Activated naive CD4-positive, alpha-beta T cell treated with anti-CD3 and anti-CD28 coated beads for 36 hours (primary cell): ENCODE measurements at regions of chr3 and their contacts with region 1.

Region 1: DNA sequence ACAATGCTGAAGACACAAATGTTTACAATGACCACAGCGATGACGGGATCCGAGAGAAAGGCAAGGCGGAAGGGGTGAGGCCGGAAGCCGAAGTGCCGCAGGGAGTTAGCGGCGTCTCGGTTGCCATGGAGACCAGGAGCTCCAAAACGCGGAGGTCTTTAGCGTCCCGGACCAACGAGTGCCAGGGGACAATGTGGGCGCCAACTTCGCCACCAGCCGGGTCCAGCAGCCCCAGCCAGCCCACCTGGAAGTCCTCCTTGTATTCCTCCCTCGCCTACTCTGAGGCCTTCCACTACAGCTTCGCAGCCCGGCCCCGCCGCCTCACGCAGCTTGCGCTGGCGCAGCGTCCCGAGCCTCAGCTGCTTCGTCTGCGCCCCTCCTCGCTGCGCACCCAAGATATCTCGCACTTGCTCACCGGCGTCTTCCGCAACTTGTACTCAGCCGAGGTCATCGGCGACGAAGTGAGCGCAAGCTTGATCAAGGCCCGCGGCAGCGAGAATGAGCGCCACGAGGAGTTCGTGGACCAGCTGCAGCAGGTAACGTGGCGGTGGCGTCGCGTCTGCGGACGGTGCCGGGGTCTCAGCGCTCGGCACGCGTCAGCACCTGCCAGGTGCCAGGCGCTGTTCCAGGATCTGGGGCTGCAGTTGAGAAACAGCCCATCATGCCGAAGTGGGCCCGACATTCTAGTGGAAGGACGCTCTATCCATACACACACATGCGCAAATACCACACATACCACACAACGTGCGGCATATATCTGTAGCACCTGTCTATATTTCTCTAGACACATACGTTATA is at the start of gene DLEC1:
- DNase-seq: peak; percentile 88
- H3K4me3 Mint-ChIP-seq: peak within 1 kb of the TSS; percentile 66
- H3K27ac Mint-ChIP-seq: peak within 1 kb of the TSS; percentile 88
- H3K4me1 Mint-ChIP-seq: peaks cover 28% of the 10 kb centered on the region
- H3K27me3 Mint-ChIP-seq: peaks cover 4% of the 10 kb centered on the region
- total RNA-seq, gene DLEC1: 0.17 to 0.19 TPM

Region 2: DNA sequence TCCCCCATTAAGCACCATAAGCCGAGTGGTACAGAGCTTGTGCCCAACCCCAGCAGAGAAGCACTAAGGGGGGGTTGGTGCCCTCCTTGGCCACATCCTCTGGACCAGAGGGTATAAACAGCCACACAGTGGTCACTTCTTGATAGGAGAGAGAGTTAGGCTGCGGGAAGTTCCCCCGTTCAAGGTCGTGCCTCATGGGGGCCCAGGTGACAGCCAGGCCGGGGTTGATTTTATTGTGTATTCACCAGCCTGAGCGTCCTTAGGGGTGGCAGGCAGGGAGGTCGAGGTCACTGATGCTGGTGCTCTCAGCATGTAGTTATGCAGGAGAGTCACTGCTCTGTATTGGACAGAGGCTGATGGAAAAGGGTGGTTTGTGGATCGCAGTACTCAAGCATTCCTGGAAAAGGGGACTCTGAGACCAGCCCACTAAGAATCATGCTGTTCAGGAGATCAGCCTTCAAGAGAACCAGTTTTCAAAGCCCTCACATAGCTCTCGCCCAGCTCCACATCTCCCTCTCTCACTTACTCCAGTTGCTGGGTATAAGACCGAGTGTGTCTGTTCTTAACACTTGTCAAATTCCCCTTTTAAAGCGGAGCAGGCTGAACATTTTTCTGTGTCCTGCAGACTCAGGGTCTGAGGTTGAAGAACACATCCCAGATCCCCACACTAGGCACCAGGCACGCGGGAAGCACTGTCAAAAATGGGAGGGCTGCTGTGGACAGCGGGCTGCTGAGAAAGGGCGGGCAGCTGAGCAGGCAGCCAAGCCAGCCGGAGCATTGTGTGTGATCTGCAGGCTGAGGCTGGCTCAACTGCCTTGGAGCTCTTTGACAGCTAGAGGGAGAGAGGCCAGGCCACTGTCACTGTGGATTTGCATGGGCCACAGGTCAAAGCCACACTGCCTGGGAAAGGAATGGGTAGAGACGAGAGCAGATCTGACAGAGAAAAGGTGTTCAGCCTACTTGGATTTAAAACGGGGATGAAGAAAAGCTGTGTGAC is 585.6 kb before region 1 on chr3:
- CTCF ChIA-PET with region 1: no interaction called
- intact Hi-C with region 1: no loop called
- DNase-seq: no peak
- H3K4me3 Mint-ChIP-seq: no peak overlapping the region
- H3K27ac Mint-ChIP-seq: no peak overlapping the region
- H3K4me1 Mint-ChIP-seq: peaks cover 5% of the 10 kb centered on the region
- H3K27me3 Mint-ChIP-seq: peaks cover 63% of the 10 kb centered on the region

Region 3: GRCh38 chr3:38004415-38005076 is 34.8 kb before region 1 on chr3:
- CTCF ChIA-PET with region 1: no interaction called
- intact Hi-C with region 1: loop called (anchors 1 kb)
- DNase-seq: peak; percentile 74
- H3K4me3 Mint-ChIP-seq: no peak overlapping the region
- H3K27ac Mint-ChIP-seq: peak overlapping the region; percentile 63
- H3K4me1 Mint-ChIP-seq: peaks cover 11% of the 10 kb centered on the region
- H3K27me3 Mint-ChIP-seq: no peaks in the 10 kb centered on the region

Region 4: DNA sequence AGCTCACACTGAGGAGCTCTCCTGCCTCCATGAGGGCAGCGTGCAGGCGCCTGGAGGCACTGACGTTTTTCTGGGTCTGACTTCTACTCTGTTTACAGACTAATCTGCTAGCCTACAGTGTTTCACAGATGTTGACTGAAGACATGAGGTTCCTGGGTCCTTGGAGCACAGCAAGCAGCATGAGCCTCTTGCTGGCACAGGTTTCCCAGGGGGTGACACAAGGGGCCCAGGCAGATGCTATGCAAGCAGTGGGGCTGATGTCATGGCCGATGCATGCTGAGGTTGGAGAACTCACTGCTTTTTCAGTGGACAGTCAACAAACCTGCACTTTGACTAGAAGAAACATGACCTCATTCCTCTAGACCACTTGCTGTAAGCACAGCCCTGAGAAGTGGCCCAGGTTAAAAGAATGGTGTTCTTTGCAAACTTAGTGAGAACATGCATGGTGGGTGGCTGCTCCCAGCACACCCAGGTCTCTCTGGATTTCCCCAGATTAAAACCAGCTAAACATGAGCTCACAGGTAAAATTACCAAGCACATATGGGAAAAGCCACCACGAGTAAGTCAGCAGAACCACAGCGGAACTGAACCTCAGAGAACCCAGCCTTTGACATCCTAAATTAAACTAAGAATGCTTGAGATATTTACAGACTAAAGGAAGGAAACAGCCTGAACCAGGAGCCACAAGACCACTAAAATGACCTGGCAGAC is 15.1 kb after region 1 on chr3:
- CTCF ChIA-PET with region 1: interaction called, 4 read pairs
- intact Hi-C with region 1: loop called (anchors 1 kb)
- DNase-seq: peak; percentile 18
- H3K4me3 Mint-ChIP-seq: no peak overlapping the region
- H3K27ac Mint-ChIP-seq: no peak overlapping the region
- H3K4me1 Mint-ChIP-seq: peaks cover 7% of the 10 kb centered on the region
- H3K27me3 Mint-ChIP-seq: no peaks in the 10 kb centered on the region

Region 5: DNA sequence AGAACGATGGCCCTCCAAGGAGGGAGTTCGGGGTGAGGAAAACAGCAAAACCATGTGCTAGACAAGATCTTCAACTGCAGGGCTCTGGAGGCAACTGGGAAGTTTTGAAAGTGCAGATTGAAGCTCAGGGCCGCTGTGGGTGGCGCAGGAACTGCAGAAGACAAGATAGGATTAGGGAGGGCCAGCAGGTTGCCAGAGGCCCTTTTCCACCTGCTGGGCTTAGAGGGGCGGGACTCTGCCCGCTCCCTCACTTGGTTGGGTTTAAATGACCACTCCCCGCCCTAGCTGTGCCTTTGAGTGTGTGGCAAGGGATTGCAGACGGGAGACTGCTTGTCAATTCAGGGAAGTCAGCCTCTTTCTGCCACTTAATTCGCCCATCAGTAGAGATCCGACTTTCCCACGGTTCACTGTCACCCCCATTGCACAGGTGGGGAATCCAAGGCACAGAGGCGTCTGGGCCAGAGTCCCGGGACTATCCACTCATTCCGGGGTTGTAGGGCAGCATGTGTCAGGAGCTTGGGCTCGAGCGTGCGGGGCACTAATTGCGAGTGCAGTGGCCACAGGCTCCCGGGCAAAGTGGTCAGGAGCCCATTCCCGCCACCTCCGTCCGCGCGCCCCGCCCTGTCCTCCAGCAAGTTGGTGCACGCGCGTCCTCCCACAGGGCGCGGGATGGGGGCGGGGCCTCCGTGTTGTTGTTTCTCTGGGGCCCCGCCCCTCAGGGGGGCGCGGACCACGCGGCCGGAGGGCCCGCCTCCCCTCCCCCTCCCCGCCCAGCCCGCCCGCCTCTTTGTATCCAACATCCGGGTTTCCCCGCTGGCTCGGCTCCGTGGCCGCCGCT is 414.0 kb after region 1 on chr3 and contains the start of gene ACVR2B:
- CTCF ChIA-PET with region 1: no interaction called
- intact Hi-C with region 1: loop called (anchors 5 kb)
- DNase-seq: peak; percentile 74
- H3K4me3 Mint-ChIP-seq: peak within 1 kb of the TSS; percentile 96
- H3K27ac Mint-ChIP-seq: peak within 1 kb of the TSS; percentile 74
- H3K4me1 Mint-ChIP-seq: peaks cover 2% of the 10 kb centered on the region
- H3K27me3 Mint-ChIP-seq: no peaks in the 10 kb centered on the region
- total RNA-seq, gene ACVR2B: 6.5 to 6.9 TPM